CD4-positive, alpha-beta memory T cell (primary cell): ENCODE measurements at regions of chr19 and their contacts with region 1.

Region 1: GRCh38 chr19:10717356-10718204 is at the start of gene DNM2:
- DNase-seq: peak; percentile 97 to 100 (median 99)
- H3K4me3 ChIP-seq: peak within 1 kb of the TSS; percentile 65 to 86
- H3K4me3 Mint-ChIP-seq: peak within 1 kb of the TSS; percentile 92 to 97 (median 95)
- H3K27ac ChIP-seq: peak within 1 kb of the TSS; percentile 80
- H3K27ac Mint-ChIP-seq: peak within 1 kb of the TSS; percentile 88 to 97 (median 92)
- H3K4me1 ChIP-seq: peaks cover 44% of the 10 kb centered on the region
- H3K4me1 Mint-ChIP-seq: peaks cover 17 to 51% (median 37%) of the 10 kb centered on the region in 4 donors
- H3K27me3 ChIP-seq: no peaks in the 10 kb centered on the region
- H3K27me3 Mint-ChIP-seq: no peaks in the 10 kb centered on the region
- total RNA-seq, gene DNM2: 245 to 272 TPM

Region 2: GRCh38 chr19:10695401-10696398 is 21.9 kb before region 1 on chr19:
- CTCF ChIA-PET with region 1: interaction called, 37 read pairs
- POLR2A ChIA-PET with region 1: interaction called, 33 read pairs
- intact Hi-C with region 1: loop called (anchors 1 kb)
- DNase-seq: peak; percentile 84 to 87 (median 85)
- H3K4me3 ChIP-seq: peak overlapping the region in 1 of 2 donors; percentile 49
- H3K4me3 Mint-ChIP-seq: peak overlapping the region; percentile 84 to 93 (median 90)
- H3K27ac ChIP-seq: no peak overlapping the region
- H3K27ac Mint-ChIP-seq: peak overlapping the region in 6 of 7 donors; percentile 42 to 94 (median 84)
- H3K4me1 ChIP-seq: peaks cover 12% of the 10 kb centered on the region
- H3K4me1 Mint-ChIP-seq: peaks cover 10 to 26% (median 16%) of the 10 kb centered on the region in 4 donors
- H3K27me3 ChIP-seq: no peaks in the 10 kb centered on the region
- H3K27me3 Mint-ChIP-seq: peaks cover 3 to 12% of the 10 kb centered on the region in 2 donors

Region 3: DNA sequence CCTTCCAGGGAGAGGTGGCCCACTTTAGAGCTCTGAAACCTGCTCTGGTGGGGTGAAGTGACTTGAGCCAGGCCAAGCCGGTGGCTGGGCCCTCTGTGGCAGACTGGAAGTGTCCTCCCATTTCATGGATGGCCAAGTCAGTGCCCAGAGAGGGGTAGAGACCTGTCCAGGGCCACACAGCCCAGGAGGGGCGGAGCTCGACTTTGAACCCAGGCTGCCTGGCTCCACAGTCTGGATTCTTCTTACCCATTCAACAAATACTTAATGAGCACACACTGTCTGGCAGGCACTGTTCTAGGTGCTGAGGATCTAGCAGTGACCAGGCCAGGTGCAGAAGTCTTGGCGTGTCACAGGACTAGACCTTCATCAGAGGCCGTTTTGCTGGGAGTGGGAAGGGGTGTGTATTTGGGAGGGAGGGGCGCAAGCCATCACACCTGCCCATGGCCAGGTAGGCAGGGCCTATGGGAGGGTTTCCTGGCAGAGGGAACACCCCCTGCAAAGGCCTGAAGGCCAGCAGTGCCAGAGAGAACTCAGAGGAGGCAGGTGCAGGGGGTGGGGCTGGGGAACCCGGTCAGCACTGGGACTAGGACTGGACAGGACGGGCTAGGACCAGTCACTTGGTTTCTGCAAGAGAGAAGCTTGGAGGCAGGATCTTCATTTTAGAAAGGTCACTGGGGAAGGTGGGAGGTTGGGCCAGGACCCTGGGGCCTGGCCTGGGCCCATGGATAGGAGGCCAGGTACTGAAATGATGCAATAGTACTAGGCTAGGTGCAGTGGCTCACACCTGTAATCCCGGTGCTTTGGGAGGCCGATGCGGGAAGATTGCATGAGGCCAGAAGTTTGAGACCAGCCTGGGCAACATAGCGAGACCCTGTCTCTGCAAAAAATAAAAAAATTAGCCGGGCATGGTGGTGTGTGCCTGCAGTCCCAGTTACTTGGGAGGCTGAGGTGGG is 32.1 kb after region 1 on chr19:
- CTCF ChIA-PET with region 1: no interaction called
- POLR2A ChIA-PET with region 1: no interaction called
- intact Hi-C with region 1: no loop called
- DNase-seq: no peak
- H3K4me3 ChIP-seq: no peak overlapping the region
- H3K4me3 Mint-ChIP-seq: peak overlapping the region in 1 of 8 donors; percentile 25
- H3K27ac ChIP-seq: peak overlapping the region; percentile 5
- H3K27ac Mint-ChIP-seq: peak overlapping the region; percentile 69 to 90 (median 78)
- H3K4me1 ChIP-seq: peaks cover 75% of the 10 kb centered on the region
- H3K4me1 Mint-ChIP-seq: peaks cover 30 to 93% (median 64%) of the 10 kb centered on the region in 4 donors
- H3K27me3 ChIP-seq: no peaks in the 10 kb centered on the region
- H3K27me3 Mint-ChIP-seq: no peaks in the 10 kb centered on the region

Region 4: GRCh38 chr19:10760273-10760944 is 42.8 kb after region 1 on chr19:
- CTCF ChIA-PET with region 1: interaction called, 40 read pairs
- POLR2A ChIA-PET with region 1: interaction called, 99 read pairs
- intact Hi-C with region 1: loop called (anchors 1 kb)
- DNase-seq: peak in 1 of 5 donors; percentile 80
- H3K4me3 ChIP-seq: peak overlapping the region in 1 of 2 donors; percentile 20
- H3K4me3 Mint-ChIP-seq: peak overlapping the region; percentile 50 to 89 (median 80)
- H3K27ac ChIP-seq: peak overlapping the region; percentile 48
- H3K27ac Mint-ChIP-seq: peak overlapping the region; percentile 87 to 98 (median 95)
- H3K4me1 ChIP-seq: peaks cover 88% of the 10 kb centered on the region
- H3K4me1 Mint-ChIP-seq: peaks cover 51 to 94% (median 74%) of the 10 kb centered on the region in 4 donors
- H3K27me3 ChIP-seq: no peaks in the 10 kb centered on the region
- H3K27me3 Mint-ChIP-seq: no peaks in the 10 kb centered on the region

Region 5: DNA sequence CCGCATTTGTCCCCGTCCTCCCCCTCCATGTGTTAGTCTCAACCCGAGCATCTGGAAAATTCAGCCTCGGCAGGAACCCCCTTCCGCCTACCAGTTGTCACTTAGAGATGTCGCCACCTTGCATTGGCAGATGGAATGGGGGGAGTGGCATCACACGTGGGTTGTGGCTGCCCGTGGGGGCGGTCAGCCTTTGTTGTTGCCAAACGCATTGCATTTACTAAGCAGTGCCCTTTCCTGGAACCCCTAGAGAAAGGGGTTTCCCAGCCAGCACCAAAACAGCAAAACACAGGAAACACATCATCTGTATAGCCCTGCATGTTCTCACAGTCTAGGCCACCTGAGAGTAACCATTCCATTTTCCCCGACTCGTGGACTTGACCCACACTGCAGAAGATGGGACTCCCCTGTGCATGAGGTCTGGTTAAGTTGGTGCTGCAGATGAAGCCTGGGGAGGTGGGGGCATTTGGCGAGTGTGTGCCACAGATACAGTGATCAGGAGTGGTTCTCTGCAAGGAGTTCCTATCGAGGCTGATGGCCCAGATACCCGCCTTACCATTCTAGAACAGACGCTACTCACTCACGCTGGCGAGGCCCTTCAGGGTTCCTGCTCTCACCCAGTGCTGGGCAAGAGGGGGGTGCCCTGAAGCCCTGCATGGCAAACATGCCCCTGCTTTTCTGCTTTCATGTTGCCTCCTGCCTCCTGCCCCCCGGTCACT is 80.1 kb after region 1 on chr19:
- CTCF ChIA-PET with region 1: interaction called, 6 read pairs
- POLR2A ChIA-PET with region 1: interaction called, 11 read pairs
- intact Hi-C with region 1: loop called (anchors 1 kb)
- DNase-seq: peak; percentile 85 to 97 (median 88)
- H3K4me3 ChIP-seq: peak overlapping the region in 1 of 2 donors; percentile 29
- H3K4me3 Mint-ChIP-seq: peak overlapping the region; percentile 78 to 90 (median 86)
- H3K27ac ChIP-seq: peak overlapping the region; percentile 75
- H3K27ac Mint-ChIP-seq: peak overlapping the region; percentile 97 to 99 (median 98)
- H3K4me1 ChIP-seq: peaks cover 40% of the 10 kb centered on the region
- H3K4me1 Mint-ChIP-seq: peaks cover 20 to 45% (median 29%) of the 10 kb centered on the region in 4 donors
- H3K27me3 ChIP-seq: no peaks in the 10 kb centered on the region
- H3K27me3 Mint-ChIP-seq: no peaks in the 10 kb centered on the region

Region 6: DNA sequence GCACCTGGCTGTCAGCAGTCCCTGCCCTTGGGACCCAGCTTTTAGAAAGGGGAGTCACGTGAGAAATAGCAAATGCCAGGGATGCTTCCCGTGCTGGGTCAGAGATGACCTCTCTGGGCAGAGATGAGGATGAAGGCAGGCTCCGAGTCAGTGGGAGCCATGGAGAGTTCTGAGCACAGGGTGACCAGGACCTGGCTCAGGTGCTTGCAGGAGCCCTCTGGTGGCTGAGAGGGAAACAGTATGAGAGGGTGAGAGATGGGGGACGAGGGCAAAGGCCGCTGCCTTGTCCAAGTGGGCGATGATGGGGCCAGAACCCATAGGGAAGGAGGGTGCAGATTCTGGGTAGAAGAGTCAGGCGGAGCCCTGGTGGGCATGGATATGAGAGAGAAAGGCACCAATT is 102.6 kb after region 1 on chr19:
- CTCF ChIA-PET with region 1: interaction called, 29 read pairs
- POLR2A ChIA-PET with region 1: interaction called, 7 read pairs
- intact Hi-C with region 1: no loop called
- DNase-seq: no peak
- H3K4me3 ChIP-seq: no peak overlapping the region
- H3K4me3 Mint-ChIP-seq: no peak overlapping the region
- H3K27ac ChIP-seq: no peak overlapping the region
- H3K27ac Mint-ChIP-seq: peak overlapping the region; percentile 29 to 97 (median 78)
- H3K4me1 ChIP-seq: no peaks in the 10 kb centered on the region
- H3K4me1 Mint-ChIP-seq: peaks cover 0 to 3% (median 3%) of the 10 kb centered on the region in 4 donors
- H3K27me3 ChIP-seq: no peaks in the 10 kb centered on the region
- H3K27me3 Mint-ChIP-seq: no peaks in the 10 kb centered on the region

Region 7: DNA sequence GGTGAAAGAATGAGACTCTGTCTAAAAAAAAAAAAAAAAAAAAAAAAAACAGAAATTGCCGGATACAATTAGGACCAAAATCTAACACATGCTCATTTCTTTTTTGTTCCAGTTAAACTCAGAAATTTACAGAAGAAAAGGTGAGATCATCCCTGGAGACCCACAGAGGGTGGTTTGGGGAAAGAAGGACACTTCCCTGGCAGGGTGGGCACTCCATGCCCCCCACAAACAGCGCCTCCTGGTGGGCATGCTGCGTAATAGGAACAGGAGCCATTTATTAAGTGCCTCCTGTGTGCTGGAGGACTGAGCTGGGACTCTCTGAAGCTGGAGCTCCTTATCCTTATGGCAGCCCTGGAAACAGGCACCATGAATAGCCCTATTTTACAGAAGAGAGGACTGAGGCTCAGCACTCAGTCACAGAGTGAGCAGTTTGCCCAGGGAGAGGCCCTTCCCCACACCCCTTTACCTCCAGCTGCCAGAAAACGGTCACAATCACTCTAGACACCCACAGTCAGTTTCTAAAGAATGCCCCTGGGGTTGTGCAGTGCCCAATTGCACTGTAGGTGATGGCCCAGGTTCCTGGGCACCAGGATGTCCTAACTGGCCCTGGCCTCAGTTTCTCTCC is 140.7 kb after region 1 on chr19:
- CTCF ChIA-PET with region 1: interaction called, 186 read pairs
- POLR2A ChIA-PET with region 1: interaction called, 49 read pairs
- intact Hi-C with region 1: no loop called
- DNase-seq: no peak
- H3K4me3 ChIP-seq: no peak overlapping the region
- H3K4me3 Mint-ChIP-seq: no peak overlapping the region
- H3K27ac ChIP-seq: no peak overlapping the region
- H3K27ac Mint-ChIP-seq: peak overlapping the region in 1 of 7 donors; percentile 72
- H3K4me1 ChIP-seq: no peaks in the 10 kb centered on the region
- H3K4me1 Mint-ChIP-seq: peaks cover 0 to 7% (median 2%) of the 10 kb centered on the region in 4 donors
- H3K27me3 ChIP-seq: no peaks in the 10 kb centered on the region
- H3K27me3 Mint-ChIP-seq: no peaks in the 10 kb centered on the region

Region 8: DNA sequence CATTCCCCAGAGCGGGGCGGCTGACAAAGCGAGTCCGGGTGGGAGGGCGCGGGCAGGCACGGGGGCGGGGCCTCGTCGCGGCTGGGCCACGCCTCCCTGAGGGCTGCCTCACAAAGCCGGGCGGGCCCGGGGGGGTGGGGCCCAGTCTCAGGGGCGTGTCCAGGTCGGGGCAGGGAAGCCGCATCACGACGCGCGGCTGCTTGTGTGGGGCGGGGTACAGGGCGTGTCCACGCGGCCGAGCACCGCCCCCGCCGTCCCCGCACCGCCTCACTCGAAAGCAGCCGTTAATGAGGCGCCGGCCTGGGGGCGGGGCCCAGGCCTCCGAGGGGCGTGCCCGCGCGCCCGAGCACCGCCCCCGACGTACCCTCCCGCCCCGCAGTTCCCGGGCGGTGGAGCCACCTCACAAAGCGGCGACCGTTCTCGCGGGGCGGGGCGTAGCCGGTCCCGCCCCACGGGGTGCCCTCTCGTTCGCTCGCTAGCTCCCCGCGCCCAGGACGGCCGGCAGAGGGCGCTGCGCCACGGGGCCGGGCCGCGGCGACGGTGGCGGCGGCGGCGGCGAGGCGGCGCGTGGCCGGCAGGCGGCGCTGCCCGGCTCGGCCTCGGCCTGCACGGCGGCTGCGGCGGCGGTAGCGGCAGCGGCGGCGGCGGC is 153.5 kb after region 1 on chr19 and contains the start of gene CARM1:
- CTCF ChIA-PET with region 1: interaction called, 186 read pairs
- POLR2A ChIA-PET with region 1: interaction called, 15 read pairs
- intact Hi-C with region 1: no loop called
- DNase-seq: peak; percentile 99 to 100 (median 99)
- H3K4me3 ChIP-seq: peak within 1 kb of the TSS; percentile 47 to 55
- H3K4me3 Mint-ChIP-seq: peak within 1 kb of the TSS; percentile 81 to 94 (median 86)
- H3K27ac ChIP-seq: peak within 1 kb of the TSS; percentile 55
- H3K27ac Mint-ChIP-seq: peak within 1 kb of the TSS; percentile 76 to 96 (median 92)
- H3K4me1 ChIP-seq: peaks cover 20% of the 10 kb centered on the region
- H3K4me1 Mint-ChIP-seq: peaks cover 8 to 24% (median 16%) of the 10 kb centered on the region in 4 donors
- H3K27me3 ChIP-seq: no peaks in the 10 kb centered on the region
- H3K27me3 Mint-ChIP-seq: no peaks in the 10 kb centered on the region
- total RNA-seq, gene CARM1: 25.2 to 26.5 TPM